ENCODE measurements at regions of chr4 and their contacts with region 1.

Region 1: DNA sequence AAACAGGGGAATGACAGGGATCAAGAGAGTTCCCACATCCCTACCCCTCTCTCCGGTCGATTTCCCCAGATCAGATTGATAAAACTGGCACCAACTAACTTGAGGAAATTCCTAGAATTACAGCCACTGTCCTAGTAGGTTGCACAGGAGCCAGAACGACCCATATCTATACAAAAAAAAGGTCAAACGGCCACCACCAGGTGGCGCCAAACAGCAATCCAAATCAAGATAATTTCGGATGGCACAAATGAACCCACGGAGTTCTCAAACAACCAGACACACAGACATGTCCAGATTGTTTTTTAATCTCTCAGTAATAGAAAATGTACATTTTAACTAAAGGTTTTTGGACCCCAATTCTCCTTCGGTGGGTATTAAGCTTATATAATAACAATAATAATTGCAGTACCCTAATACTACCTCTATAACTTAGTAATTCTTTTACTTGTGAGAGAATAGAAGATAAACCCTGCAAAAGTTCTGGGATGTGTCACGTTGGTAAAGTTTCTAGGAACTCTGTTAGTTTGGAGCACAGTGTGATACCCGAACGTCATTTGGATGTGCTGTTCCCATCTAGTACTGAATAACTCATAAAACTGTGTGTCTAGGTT is 212.6 kb downstream of the SPOCK3 start:
- DNase-seq: peak; percentile 6 to 95 (median 82)

Region 2: GRCh38 chr4:167234316-167234881 is 212.7 kb after region 1 on chr4 and contains the start of gene SPOCK3:
- intact Hi-C with region 1: loop called (anchors 5 kb)
- DNase-seq: peak; percentile 67 to 96 (median 89)

Region 3: GRCh38 chr4:167290678-167291077 is 269.0 kb after region 1 on chr4:
- intact Hi-C with region 1: loop called (anchors 5 kb)
- DNase-seq: no peak

Measured in head of caudate nucleus (tissue), 42 donors.